ENCODE measurements at regions of chr1 and their contacts with region 1.

Region 1: DNA sequence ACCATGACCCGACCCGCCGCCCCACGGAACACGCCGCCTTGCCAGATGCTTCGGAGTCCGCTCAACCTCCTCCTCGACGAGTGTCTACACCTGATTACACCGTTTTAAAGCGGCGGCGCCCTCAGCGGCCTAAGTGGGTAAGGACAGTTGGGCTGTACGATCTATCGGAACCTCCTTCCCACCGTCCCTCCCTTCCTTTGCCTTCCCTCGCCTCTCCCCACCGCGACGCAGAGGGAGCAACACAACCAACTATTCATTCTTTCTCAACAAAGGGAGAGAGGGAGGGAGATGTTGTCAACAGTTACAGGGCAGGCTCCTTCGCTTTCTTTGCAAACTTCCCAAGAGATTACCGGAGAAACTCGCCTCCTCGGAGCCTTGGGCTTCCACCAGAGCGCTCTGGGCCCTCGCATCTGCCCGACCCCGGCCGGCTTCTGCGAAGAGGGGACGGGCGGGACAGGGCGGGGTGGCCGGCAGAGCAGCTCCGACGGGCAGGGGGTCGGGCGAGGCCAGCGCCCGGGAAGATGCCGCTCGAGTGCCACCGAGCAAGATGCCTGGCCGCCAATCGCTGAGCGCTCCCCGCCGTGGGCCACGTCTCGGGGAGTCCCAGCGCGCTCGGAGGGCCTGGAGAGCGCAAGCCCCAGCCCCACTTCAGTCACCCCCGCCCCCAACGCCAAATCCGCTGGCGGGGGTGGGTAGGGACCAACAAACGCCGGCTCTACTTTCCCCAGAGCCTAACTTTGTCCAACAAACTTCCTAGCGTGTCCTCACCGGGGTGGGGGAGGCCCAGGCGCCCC is 683 bp downstream of the BCAR3 start:
- DNase-seq: peak; percentile 65 to 74
- H3K4me3 ChIP-seq: peak overlapping the region; percentile 59
- H3K4me3 Mint-ChIP-seq: peak overlapping the region; percentile 91
- H3K27ac Mint-ChIP-seq: peak overlapping the region; percentile 50
- H3K4me1 ChIP-seq: peaks cover 15% of the 10 kb centered on the region
- H3K4me1 Mint-ChIP-seq: peaks cover 26% of the 10 kb centered on the region
- H3K27me3 ChIP-seq: no peaks in the 10 kb centered on the region
- H3K27me3 Mint-ChIP-seq: no peaks in the 10 kb centered on the region
- CTCF ChIP-seq: peak; percentile 24 to 35

Region 2: DNA sequence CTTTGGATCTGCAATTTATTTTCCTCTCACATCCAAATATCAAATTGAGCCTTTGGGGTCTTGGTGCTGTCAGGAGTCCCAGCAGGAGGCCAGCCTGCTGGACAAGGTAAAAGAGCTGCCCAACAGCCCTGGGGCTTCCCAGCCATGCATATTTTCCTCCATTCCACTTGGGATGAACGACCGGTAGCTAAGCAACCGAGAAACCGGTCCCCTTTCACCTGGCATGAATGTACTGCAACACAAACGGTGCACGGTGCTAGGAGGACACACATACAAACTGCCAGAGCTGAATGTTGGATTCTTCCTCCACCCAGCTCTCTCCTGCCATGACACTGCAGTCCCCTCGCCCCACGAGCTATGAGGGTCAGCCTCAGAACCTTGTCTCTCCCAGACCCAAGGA is 42.0 kb before region 1 on chr1:
- CTCF ChIA-PET with region 1: no interaction called
- POLR2A ChIA-PET with region 1: no interaction called
- intact Hi-C with region 1: loop called (anchors 2 kb)
- DNase-seq: peak; percentile 38 to 52
- H3K4me3 ChIP-seq: no peak overlapping the region
- H3K4me3 Mint-ChIP-seq: peak overlapping the region; percentile 43
- H3K27ac Mint-ChIP-seq: peak overlapping the region; percentile 93
- H3K4me1 ChIP-seq: peaks cover 17% of the 10 kb centered on the region
- H3K4me1 Mint-ChIP-seq: peaks cover 6% of the 10 kb centered on the region
- H3K27me3 ChIP-seq: no peaks in the 10 kb centered on the region
- H3K27me3 Mint-ChIP-seq: no peaks in the 10 kb centered on the region
- CTCF ChIP-seq: no peak

Measured in Caco-2 (cell line).